MCF 10A (cell line): ENCODE measurements at regions of chr15 and their contacts with region 1.

Region 1: GRCh38 chr15:90320061-90320884 is 31.8 kb upstream of the ZNF774 start:
- DNase-seq: peak; percentile 92
- H3K4me3 Mint-ChIP-seq: peak overlapping the region; percentile 2
- H3K27ac Mint-ChIP-seq: peak overlapping the region; percentile 89
- H3K4me1 Mint-ChIP-seq: peaks cover 19% of the 10 kb centered on the region
- H3K27me3 Mint-ChIP-seq: no peaks in the 10 kb centered on the region
- CTCF ChIP-seq: peak; percentile 98

Region 2: DNA sequence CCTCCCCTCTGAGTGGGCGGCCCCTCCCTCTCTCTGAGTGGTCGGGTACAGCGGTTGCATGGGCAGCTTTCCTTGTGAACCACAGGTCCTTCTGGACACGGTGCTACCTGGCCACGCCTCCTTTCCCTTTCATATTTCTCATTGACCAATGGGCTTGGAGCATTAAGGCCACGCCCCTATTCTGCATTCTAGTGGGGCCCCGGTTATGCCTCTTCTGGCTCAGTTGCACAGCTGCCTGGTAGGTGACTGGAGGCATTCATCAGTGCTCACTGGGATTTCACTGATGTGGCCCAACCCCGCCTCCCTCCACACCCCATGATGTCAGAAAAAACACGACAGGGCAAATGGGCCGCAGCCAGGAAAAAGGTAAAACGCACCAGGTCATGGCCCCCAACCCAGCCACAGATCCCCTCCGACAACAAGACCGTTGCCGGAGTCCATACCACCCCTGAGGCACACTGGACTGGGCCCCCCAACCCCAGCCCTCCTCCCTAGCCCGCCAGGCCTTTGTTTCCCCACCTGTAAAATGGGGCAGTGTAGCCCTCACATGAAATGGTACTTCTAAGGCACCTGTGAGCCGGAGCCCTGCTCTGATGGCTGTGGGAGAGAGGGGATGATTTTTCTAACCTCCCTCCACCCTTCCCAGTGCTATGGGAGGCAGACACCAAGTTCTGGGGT is 28.5 kb before region 1 on chr15:
- CTCF ChIA-PET with region 1: interaction called, 25 read pairs
- POLR2A ChIA-PET with region 1: interaction called, 3 read pairs
- intact Hi-C with region 1: loop called (anchors 2 kb)
- DNase-seq: peak; percentile 69
- H3K4me3 Mint-ChIP-seq: no peak overlapping the region
- H3K27ac Mint-ChIP-seq: no peak overlapping the region
- H3K4me1 Mint-ChIP-seq: peaks cover 6% of the 10 kb centered on the region
- H3K27me3 Mint-ChIP-seq: no peaks in the 10 kb centered on the region
- CTCF ChIP-seq: no peak

Region 3: DNA sequence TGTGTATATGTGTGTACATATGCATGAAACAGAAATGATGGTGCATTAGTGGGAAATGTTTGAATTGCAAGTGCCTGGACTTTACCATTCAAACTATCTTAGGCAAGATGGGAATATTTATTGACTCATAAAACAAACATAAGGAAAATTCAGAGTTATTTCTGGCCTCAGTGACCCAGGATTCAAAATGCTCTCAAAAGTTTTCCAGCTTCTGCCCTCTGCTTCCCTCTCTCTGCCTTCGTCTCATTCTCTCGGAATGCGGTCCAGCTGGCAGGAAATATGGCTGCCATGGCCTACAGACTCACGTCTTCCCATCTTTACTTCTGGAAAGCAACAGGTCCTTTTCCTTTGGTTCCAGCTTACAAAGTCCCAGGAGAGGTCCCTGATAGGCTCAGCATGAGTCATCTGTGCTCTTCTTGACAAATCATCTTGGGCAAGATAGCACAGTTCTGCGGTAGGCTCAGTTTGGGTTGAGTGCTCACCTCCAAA is 23.1 kb after region 1 on chr15:
- CTCF ChIA-PET with region 1: interaction called, 25 read pairs
- POLR2A ChIA-PET with region 1: no interaction called
- intact Hi-C with region 1: no loop called
- DNase-seq: peak; percentile 49
- H3K4me3 Mint-ChIP-seq: no peak overlapping the region
- H3K27ac Mint-ChIP-seq: no peak overlapping the region
- H3K4me1 Mint-ChIP-seq: peaks cover 8% of the 10 kb centered on the region
- H3K27me3 Mint-ChIP-seq: no peaks in the 10 kb centered on the region
- CTCF ChIP-seq: no peak

Region 4: GRCh38 chr15:90400406-90401314 is 80.4 kb after region 1 on chr15:
- CTCF ChIA-PET with region 1: interaction called, 14 read pairs
- POLR2A ChIA-PET with region 1: interaction called, 4 read pairs
- intact Hi-C with region 1: no loop called
- DNase-seq: peak; percentile 93
- H3K4me3 Mint-ChIP-seq: peak overlapping the region; percentile 52
- H3K27ac Mint-ChIP-seq: peak overlapping the region; percentile 87
- H3K4me1 Mint-ChIP-seq: peaks cover 30% of the 10 kb centered on the region
- H3K27me3 Mint-ChIP-seq: no peaks in the 10 kb centered on the region
- CTCF ChIP-seq: no peak

Region 5: GRCh38 chr15:90482124-90483011 is 162.1 kb after region 1 on chr15:
- CTCF ChIA-PET with region 1: interaction called, 86 read pairs
- POLR2A ChIA-PET with region 1: interaction called, 14 read pairs
- intact Hi-C with region 1: loop called (anchors 1 kb)
- DNase-seq: peak; percentile 51
- H3K4me3 Mint-ChIP-seq: no peak overlapping the region
- H3K27ac Mint-ChIP-seq: no peak overlapping the region
- H3K4me1 Mint-ChIP-seq: peaks cover 18% of the 10 kb centered on the region
- H3K27me3 Mint-ChIP-seq: no peaks in the 10 kb centered on the region
- CTCF ChIP-seq: peak; percentile 56

Region 6: GRCh38 chr15:90603893-90604292 is 283.6 kb after region 1 on chr15:
- CTCF ChIA-PET with region 1: interaction called, 4 read pairs
- POLR2A ChIA-PET with region 1: no interaction called
- intact Hi-C with region 1: loop called (anchors 10 kb)
- DNase-seq: peak; percentile 42
- H3K4me3 Mint-ChIP-seq: no peak overlapping the region
- H3K27ac Mint-ChIP-seq: no peak overlapping the region
- H3K4me1 Mint-ChIP-seq: no peaks in the 10 kb centered on the region
- H3K27me3 Mint-ChIP-seq: no peaks in the 10 kb centered on the region
- CTCF ChIP-seq: peak; percentile 34